ENCODE measurements at regions of chr9 and their contacts with region 1.

Region 1: GRCh38 chr9:129333953-129334724 is 156.1 kb upstream of the IER5L start:
- DNase-seq: peak; percentile 98
- H3K4me3 Mint-ChIP-seq: peak overlapping the region; percentile 71
- H3K27ac Mint-ChIP-seq: peak overlapping the region; percentile 97
- H3K4me1 Mint-ChIP-seq: peaks cover 19% of the 10 kb centered on the region
- H3K27me3 Mint-ChIP-seq: no peaks in the 10 kb centered on the region
- CTCF ChIP-seq: no peak

Region 2: GRCh38 chr9:128455849-128456612 is 878.1 kb before region 1 on chr9 and contains the start of gene ODF2:
- CTCF ChIA-PET with region 1: no interaction called
- POLR2A ChIA-PET with region 1: no interaction called
- intact Hi-C with region 1: no loop called
- DNase-seq: peak; percentile 95
- H3K4me3 Mint-ChIP-seq: peak within 1 kb of the TSS; percentile 98
- H3K27ac Mint-ChIP-seq: peak within 1 kb of the TSS; percentile 96
- H3K4me1 Mint-ChIP-seq: no peaks in the 10 kb centered on the region
- H3K27me3 Mint-ChIP-seq: no peaks in the 10 kb centered on the region
- CTCF ChIP-seq: no peak
- total RNA-seq, gene ODF2: 34.4 and 37.3 TPM in 2 replicates

Region 3: DNA sequence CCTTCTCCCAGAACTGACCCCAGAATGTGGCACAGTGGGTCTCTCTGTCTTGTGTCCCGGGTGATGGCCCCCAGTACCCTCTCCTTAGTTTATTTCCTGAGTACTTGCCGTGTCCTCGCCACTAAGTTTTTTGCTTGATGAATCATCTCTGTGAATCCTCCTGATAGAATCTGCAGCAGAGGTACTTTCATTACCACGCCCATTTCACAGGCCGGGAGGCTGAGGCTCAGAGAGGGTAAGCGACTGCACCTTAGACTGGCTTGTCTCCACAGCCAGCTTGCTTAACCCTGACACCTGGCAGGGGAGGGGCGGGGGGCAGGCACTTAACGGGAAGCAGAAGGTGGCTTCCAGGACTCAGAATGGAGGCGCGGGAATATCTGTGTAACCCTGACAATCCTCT is 148.1 kb before region 1 on chr9:
- CTCF ChIA-PET with region 1: no interaction called
- POLR2A ChIA-PET with region 1: interaction called, 10 read pairs
- intact Hi-C with region 1: no loop called
- DNase-seq: peak; percentile 24
- H3K4me3 Mint-ChIP-seq: no peak overlapping the region
- H3K27ac Mint-ChIP-seq: no peak overlapping the region
- H3K4me1 Mint-ChIP-seq: peaks cover 9% of the 10 kb centered on the region
- H3K27me3 Mint-ChIP-seq: no peaks in the 10 kb centered on the region
- CTCF ChIP-seq: no peak

Region 4: DNA sequence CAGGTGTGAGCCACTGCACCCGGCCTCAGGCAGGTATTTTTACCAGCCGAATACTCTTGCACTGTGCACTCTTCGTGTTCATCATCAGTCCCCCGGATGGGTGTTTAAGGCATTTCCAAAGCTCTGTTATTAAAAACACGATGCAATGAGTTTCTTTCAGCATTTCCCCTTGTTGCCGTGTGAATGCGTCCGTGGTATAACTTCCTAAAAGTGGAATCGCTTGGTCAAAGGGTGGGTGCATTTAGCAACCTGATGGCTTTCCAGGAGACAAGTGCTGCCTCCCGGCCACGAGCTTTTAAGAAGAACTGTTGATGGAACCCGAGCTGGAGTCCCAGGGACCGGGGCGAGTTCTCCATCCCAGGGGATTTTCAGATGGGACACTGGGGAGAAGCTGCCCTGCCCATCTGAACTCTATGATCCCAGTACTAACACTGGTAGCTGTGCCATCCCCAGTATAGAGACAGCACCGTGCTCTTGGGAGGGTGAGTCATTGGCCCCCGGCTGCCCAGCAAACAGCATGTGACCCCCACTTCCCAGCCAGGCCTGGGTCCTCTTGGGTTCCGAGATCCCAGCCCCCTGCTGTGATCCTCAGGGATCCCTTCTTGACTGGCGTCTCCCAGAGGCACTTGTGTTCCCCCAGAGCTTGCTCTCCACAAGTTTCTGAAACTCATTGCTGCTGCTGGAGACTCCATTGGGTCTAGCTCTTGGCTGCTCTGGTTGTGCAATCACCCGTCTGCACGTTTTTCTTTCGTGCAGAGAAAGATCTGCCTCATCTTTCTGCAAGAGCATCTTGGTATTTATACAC is 13.4 kb after region 1 on chr9:
- CTCF ChIA-PET with region 1: interaction called, 4 read pairs
- POLR2A ChIA-PET with region 1: interaction called, 38 read pairs
- intact Hi-C with region 1: no loop called
- DNase-seq: peak; percentile 50
- H3K4me3 Mint-ChIP-seq: no peak overlapping the region
- H3K27ac Mint-ChIP-seq: no peak overlapping the region
- H3K4me1 Mint-ChIP-seq: peaks cover 5% of the 10 kb centered on the region
- H3K27me3 Mint-ChIP-seq: no peaks in the 10 kb centered on the region
- CTCF ChIP-seq: no peak

Region 5: DNA sequence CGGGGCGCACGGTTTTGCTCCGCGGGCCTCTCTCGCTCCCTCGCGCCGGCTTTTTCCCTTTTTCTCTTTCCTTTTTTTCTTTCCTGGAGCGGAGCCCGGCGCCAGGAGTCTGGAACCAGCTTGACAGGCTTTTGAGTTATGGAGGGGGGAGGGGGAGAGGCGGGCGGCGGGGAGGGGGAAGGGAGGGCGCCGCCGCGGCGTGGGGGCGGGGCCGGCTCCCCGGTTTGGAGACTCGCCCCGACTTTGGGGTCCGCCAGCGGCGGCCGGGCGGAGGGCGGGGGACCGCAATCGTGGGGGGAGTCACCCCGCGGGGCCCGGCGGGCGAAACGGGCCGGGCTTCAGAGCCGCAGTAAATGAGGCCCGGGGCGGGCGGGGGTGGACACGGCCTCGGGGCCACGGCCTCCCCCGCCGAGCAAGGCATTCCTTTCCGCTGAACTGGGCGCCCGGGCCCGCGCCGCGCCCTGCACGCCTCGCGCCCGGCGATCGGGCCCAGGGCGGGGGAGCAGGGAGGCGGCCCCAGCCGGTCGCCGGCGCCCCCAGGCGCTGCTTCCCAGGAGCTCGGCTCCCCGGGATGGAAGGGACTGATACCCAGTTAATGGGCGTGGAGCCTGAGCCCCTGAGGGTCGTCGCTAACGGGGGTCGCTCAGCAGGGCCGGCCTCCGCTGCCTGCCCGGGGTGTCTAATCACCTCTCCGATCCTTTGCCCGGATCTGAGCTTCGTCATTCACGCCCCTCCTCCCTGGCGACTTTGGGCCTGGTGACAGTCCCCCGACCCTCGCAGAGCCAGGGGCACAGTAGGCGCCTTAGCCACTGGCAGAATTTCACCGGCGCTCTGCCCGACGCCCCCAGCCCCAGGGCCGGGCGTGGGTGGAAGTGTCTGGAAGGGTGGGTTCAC is 148.6 kb after region 1 on chr9:
- CTCF ChIA-PET with region 1: interaction called, 3 read pairs
- POLR2A ChIA-PET with region 1: interaction called, 80 read pairs
- intact Hi-C with region 1: loop called (anchors 5 kb)
- DNase-seq: peak; percentile 92
- H3K4me3 Mint-ChIP-seq: peak overlapping the region; percentile 70
- H3K27ac Mint-ChIP-seq: peak overlapping the region; percentile 93
- H3K4me1 Mint-ChIP-seq: peaks cover 47% of the 10 kb centered on the region
- H3K27me3 Mint-ChIP-seq: no peaks in the 10 kb centered on the region
- CTCF ChIP-seq: no peak

Region 6: DNA sequence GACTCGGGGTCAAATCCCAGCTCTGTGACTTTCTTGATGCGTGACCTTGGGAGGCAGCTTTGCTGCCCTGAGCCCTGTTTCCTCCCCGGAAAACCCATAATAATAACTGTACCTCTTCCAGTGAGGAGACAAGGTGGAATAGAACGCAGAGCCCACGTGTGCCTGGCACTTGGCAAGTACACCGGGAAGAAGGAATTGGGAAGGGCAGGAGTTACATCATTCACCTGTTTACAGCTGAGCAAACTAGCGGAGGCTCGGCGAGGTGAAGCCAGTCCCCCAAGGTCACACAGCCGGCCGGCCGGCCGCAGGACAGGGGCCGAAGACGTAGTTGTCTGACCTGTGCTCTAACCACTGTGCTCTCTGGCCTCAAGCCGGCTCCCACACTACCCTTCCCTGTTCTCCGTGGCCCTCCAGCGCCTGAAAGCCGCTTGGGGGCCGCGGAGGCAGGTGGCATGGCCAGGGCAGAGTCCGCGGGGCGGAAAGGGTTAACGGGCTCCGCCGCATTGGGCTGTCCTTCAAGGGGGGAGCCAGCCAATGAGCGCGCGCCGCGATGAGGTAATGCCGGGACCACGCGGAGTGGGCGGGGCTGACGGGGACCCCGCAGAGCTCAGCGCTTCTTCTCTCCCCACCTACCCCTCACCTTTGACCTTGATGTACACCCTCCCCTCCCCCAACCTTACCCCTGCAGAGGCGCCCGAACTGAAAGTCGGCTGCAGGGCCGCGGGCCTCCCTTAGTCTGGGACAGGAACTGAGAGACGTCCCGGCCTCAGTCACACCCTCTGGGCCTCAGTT is 161.6 kb after region 1 on chr9:
- CTCF ChIA-PET with region 1: no interaction called
- POLR2A ChIA-PET with region 1: interaction called, 61 read pairs
- intact Hi-C with region 1: loop called (anchors 5 kb)
- DNase-seq: peak; percentile 91
- H3K4me3 Mint-ChIP-seq: peak overlapping the region; percentile 76
- H3K27ac Mint-ChIP-seq: peak overlapping the region; percentile 66
- H3K4me1 Mint-ChIP-seq: peaks cover 49% of the 10 kb centered on the region
- H3K27me3 Mint-ChIP-seq: no peaks in the 10 kb centered on the region
- CTCF ChIP-seq: no peak

Region 7: GRCh38 chr9:129598089-129598601 is 264.0 kb after region 1 on chr9:
- CTCF ChIA-PET with region 1: no interaction called
- POLR2A ChIA-PET with region 1: no interaction called
- intact Hi-C with region 1: no loop called
- DNase-seq: no peak
- H3K4me3 Mint-ChIP-seq: no peak overlapping the region
- H3K27ac Mint-ChIP-seq: no peak overlapping the region
- H3K4me1 Mint-ChIP-seq: no peaks in the 10 kb centered on the region
- H3K27me3 Mint-ChIP-seq: no peaks in the 10 kb centered on the region
- CTCF ChIP-seq: no peak

Region 8: GRCh38 chr9:129626079-129626624 is 292.0 kb after region 1 on chr9 and contains the start of gene NTMT1:
- CTCF ChIA-PET with region 1: interaction called, 3 read pairs
- POLR2A ChIA-PET with region 1: interaction called, 23 read pairs
- intact Hi-C with region 1: no loop called
- DNase-seq: peak; percentile 82
- H3K4me3 Mint-ChIP-seq: peak within 1 kb of the TSS; percentile 92
- H3K27ac Mint-ChIP-seq: peak within 1 kb of the TSS; percentile 72
- H3K4me1 Mint-ChIP-seq: peaks cover 33% of the 10 kb centered on the region
- H3K27me3 Mint-ChIP-seq: no peaks in the 10 kb centered on the region
- CTCF ChIP-seq: no peak
- total RNA-seq, gene NTMT1: 32.9 and 49.2 TPM in 2 replicates